Ovary (tissue), 10 donors: ENCODE measurements at regions of chr10 and their contacts with region 1.

Region 1: GRCh38 chr10:27637362-27637964 is 108.2 kb downstream of the MKX start:
- DNase-seq: no peak
- H3K4me3 ChIP-seq: no peak overlapping the region
- H3K27ac ChIP-seq: no peak overlapping the region
- H3K4me1 ChIP-seq: no peaks in the 10 kb centered on the region
- H3K27me3 ChIP-seq: no peaks in the 10 kb centered on the region
- CTCF ChIP-seq: no peak
- EP300 ChIP-seq: no peak
- POLR2A ChIP-seq: no peak

Region 2: GRCh38 chr10:27143686-27144085 is 493.8 kb before region 1 on chr10:
- intact Hi-C with region 1: no loop called
- DNase-seq: no peak
- H3K4me3 ChIP-seq: no peak overlapping the region
- H3K27ac ChIP-seq: no peak overlapping the region
- H3K4me1 ChIP-seq: no peaks in the 10 kb centered on the region
- H3K27me3 ChIP-seq: no peaks in the 10 kb centered on the region
- CTCF ChIP-seq: no peak
- EP300 ChIP-seq: no peak
- POLR2A ChIP-seq: no peak

Region 3: DNA sequence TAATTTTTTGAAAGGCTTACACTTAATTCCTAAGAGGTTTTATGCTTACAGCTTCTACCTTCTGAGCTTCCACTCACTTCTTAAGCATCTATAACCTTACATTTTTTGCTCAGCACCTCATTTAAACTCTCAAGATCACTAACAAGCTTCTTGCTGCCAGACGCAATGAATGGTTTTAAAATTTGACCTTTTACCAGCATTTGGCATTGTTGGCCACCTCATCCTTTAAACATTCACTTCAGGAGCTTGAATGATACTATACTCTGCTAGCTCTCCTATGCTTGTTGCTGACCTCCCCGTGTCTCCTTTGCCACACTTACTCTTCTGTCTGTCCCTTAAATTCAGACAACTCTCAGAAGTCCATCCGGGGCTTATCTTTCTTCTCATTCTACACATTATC is 399.1 kb after region 1 on chr10:
- intact Hi-C with region 1: loop called in 1 of 4 experiments (anchors 5 kb)
- DNase-seq: no peak
- H3K4me3 ChIP-seq: no peak overlapping the region
- H3K27ac ChIP-seq: no peak overlapping the region
- H3K4me1 ChIP-seq: no peaks in the 10 kb centered on the region
- H3K27me3 ChIP-seq: no peaks in the 10 kb centered on the region
- CTCF ChIP-seq: no peak
- EP300 ChIP-seq: no peak
- POLR2A ChIP-seq: no peak